Lower leg skin (tissue), 4 donors: ENCODE measurements at regions of chr7 and their contacts with region 1.

Region 1: GRCh38 chr7:106461993-106462859 is 177.4 kb upstream of the NAMPT start:
- DNase-seq: no peak
- H3K4me3 ChIP-seq: no peak overlapping the region
- CTCF ChIP-seq: peak in 1 of 3 donors; percentile 63
- POLR2A ChIP-seq: no peak

Region 2: DNA sequence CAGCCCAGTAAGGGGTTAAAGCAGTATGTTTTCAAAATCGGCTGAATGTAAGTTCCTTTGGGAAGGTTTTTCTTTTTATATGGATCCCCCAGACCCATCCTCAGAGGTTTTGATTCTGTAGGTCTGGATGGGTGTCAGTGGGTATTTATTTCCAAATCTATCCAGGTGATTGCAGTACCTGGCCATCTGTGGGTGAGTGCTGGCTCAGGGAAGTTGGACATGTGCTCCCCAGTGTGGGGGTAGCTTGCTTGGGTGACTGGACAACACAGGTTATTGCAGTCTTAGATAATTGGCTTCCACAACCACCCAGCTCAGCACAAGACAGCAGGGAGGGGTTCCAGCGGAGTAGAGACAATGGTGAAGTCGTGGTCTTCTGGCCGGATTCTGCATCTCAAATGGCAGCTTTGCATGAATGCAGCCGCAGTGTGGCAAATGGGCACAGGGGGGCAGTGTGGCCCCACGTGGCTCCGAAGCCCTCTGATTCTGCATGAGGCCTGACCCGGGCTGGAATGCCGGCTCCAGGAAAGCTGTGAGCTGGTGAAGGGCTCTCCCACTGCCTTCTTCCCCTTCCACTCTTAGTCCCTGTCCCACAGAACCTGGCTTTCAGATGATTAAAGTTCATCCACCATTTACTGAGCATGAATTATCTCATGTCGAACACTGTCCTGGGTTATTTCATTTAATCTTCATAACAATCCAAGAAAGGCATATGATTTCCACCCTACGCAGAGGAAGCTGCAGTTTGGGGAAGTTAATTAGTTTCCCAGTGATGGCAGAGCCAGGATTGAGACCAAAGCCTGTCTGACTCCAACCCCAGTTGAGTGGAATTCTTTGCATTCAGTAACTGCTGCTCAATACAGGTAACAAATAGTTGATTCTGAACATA is 285.6 kb before region 1 on chr7:
- intact Hi-C with region 1: loop called (anchors 2 kb)
- DNase-seq: peak; percentile 81 to 97
- H3K4me3 ChIP-seq: no peak overlapping the region
- CTCF ChIP-seq: peak in 1 of 3 donors; percentile 84
- POLR2A ChIP-seq: no peak

Region 3: DNA sequence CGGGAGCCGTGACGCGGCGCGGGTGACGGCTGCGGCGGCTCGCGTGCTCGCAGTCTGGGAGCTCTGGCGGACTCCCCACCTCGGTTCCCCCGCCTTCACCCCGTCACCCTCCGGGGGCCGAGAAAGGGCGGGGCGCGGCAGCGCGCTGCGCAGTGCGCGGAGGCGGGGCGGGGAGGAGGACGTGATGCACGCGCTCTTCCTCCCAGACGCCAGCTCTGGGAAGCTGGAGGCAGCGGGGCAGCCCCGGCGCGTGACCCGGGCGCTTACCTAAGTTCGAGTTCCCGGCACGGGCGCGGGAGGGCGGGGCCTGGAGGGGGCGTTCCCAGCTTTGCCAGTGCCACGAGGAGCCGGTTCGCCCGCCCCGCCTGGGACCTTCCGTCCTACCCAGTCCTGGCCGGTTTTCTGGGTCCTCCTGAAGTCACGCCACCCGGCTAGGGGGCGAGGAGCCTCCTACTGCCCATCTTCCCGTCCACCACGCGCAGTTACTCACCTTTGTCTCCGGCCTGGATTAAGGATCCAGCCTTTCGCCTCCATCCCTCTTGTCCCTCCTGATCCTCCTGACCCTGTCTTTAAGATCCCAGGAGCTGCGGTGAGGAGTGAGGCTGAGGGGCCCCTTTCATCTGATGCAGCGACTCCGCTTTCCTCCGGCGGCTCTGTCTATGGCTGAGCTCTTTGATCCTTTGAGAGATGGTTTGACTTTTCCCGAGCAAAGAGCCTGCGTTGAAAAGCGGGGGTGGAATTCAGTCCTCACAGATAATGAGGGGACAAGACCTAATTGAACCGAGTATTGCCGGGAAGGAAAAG is 177.0 kb before region 1 on chr7:
- intact Hi-C with region 1: loop called (anchors 10 kb)
- DNase-seq: peak; percentile 98 to 100
- H3K4me3 ChIP-seq: peak overlapping the region; percentile 48
- CTCF ChIP-seq: no peak
- POLR2A ChIP-seq: no peak